ENCODE measurements at regions of chr17 and their contacts with region 1.

Region 1: DNA sequence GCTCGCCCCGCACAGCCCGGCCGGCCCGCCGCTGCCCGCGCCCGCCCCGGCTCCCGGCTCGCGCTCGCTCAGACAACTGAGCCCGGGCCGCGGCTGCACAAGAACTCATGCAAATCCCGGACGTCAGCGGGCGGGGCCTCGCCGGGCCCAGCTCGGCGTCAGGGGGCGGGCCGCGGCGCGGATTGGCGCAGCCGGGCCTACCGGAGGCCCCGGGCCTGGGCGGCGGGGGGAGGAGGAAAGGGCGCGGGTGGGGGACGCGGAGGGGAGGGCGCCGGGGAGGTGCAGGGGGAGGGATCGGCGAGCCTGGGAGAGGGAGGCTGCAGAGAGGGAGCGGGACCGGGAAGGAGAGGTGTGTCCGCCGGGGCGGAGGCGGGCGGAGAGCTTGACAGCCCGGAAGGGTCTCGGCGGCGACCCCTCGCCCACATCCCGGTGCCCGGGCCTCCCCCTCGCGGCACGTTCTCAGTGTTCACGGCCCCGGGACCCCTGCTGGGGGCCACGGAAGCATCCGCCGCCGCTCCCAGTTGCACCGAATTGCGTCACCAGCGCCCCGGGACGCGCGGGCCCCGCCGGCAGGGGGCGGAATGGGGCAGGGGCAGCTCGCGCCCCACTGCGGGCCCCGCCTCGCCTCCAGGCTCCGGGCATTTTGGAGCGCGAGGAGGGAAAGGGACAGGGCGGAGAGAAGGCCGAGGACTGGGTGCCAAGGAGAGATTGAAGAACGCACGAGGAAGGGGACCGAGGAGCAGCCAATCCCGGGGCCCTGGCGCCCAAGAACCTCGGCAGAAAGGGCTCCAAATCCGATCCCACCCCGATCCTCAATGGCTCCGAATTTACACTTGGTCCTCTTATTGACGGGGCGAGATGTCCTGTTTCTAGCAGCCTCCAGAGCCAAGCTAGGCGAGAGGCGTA is at the start of gene CBX4:
- DNase-seq: peak; percentile 99
- H3K4me3 ChIP-seq: peak within 1 kb of the TSS; percentile 54 to 91
- H3K27ac ChIP-seq: peak within 1 kb of the TSS; percentile 74 to 77
- H3K4me1 ChIP-seq: peaks cover 26 to 63% of the 10 kb centered on the region in 2 experiments
- H3K27me3 ChIP-seq: peaks cover 39% of the 10 kb centered on the region
- CTCF ChIP-seq: peak; percentile 86
- EP300 ChIP-seq: no peak
- RAD21 ChIP-seq: no peak
- polyA plus RNA-seq, gene CBX4: 16.6 and 21.9 TPM in 2 replicates

Region 2: DNA sequence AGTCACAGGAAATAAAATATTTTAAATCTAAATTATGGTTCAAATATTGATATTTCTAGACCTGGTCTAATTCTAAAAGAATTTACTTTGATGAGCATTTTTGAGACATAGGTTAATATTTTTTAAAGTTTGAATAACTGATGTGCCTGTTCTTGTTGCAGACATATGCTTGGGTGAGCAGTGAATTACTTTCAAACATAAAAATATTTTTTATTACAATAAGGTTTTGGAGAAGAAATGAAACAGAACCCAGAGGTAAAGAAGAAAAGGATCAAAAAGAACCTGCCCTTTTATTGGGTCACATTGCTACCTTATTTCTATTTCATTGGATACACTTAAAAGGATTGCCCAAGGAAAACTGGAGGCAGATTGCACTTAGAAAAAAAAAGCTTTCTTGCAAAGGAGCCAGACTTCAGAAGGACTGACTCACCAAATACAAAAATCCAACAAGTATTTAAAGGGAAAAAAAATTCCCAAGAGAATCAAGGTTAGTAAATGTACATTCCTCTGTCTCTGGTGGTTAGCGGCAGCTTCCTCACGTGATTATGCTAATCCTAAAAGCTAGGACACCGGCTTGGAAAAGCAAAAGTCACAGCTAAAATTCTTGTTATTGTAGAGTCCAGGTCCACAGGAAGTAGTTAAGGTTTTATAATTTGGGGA is 90.3 kb before region 1 on chr17:
- CTCF ChIA-PET with region 1: interaction called, 174 read pairs
- POLR2A ChIA-PET with region 1: interaction called, 3 read pairs
- DNase-seq: no peak
- H3K4me3 ChIP-seq: no peak overlapping the region
- H3K27ac ChIP-seq: no peak overlapping the region
- H3K4me1 ChIP-seq: peaks cover 0 to 6% of the 10 kb centered on the region in 2 experiments; a peak in 1 of 4 replicates
- H3K27me3 ChIP-seq: peaks cover 22% of the 10 kb centered on the region
- CTCF ChIP-seq: no peak
- EP300 ChIP-seq: no peak
- RAD21 ChIP-seq: no peak

Region 3: GRCh38 chr17:79810130-79811010 is 29.2 kb before region 1 on chr17:
- CTCF ChIA-PET with region 1: interaction called, 274 read pairs
- POLR2A ChIA-PET with region 1: interaction called, 93 read pairs
- DNase-seq: peak; percentile 97
- H3K4me3 ChIP-seq: peak overlapping the region; percentile 51 to 64
- H3K27ac ChIP-seq: peak overlapping the region in 1 of 2 experiments; percentile 90; a peak in 2 of 4 replicates
- H3K4me1 ChIP-seq: peaks cover 15 to 41% of the 10 kb centered on the region in 2 experiments
- H3K27me3 ChIP-seq: peaks cover 43% of the 10 kb centered on the region
- CTCF ChIP-seq: no peak
- EP300 ChIP-seq: no peak; a peak in 1 of 4 replicates
- RAD21 ChIP-seq: no peak

Region 4: GRCh38 chr17:79850571-79851461 is 11.2 kb after region 1 on chr17:
- CTCF ChIA-PET with region 1: interaction called, 42 read pairs
- POLR2A ChIA-PET with region 1: interaction called, 5 read pairs
- DNase-seq: no peak
- H3K4me3 ChIP-seq: no peak overlapping the region
- H3K27ac ChIP-seq: no peak overlapping the region
- H3K4me1 ChIP-seq: peaks cover 3 to 14% of the 10 kb centered on the region in 2 experiments; a peak in 1 of 4 replicates
- H3K27me3 ChIP-seq: no peaks in the 10 kb centered on the region
- CTCF ChIP-seq: no peak
- EP300 ChIP-seq: no peak
- RAD21 ChIP-seq: no peak

Region 5: GRCh38 chr17:79915850-79916430 is 76.3 kb after region 1 on chr17:
- CTCF ChIA-PET with region 1: interaction called, 182 read pairs
- POLR2A ChIA-PET with region 1: interaction called, 11 read pairs
- DNase-seq: no peak
- H3K4me3 ChIP-seq: no peak overlapping the region
- H3K27ac ChIP-seq: no peak overlapping the region
- H3K4me1 ChIP-seq: peaks cover 9 to 27% of the 10 kb centered on the region in 2 experiments; a peak in 2 of 4 replicates
- H3K27me3 ChIP-seq: no peaks in the 10 kb centered on the region
- CTCF ChIP-seq: peak; percentile 35
- EP300 ChIP-seq: no peak
- RAD21 ChIP-seq: peak; percentile 58

Region 6: GRCh38 chr17:79970576-79971068 is 131.0 kb after region 1 on chr17:
- CTCF ChIA-PET with region 1: interaction called, 17 read pairs
- POLR2A ChIA-PET with region 1: no interaction called
- DNase-seq: peak; percentile 33
- H3K4me3 ChIP-seq: no peak overlapping the region
- H3K27ac ChIP-seq: no peak overlapping the region
- H3K4me1 ChIP-seq: no peaks in the 10 kb centered on the region; a peak in 1 of 4 replicates
- H3K27me3 ChIP-seq: no peaks in the 10 kb centered on the region
- CTCF ChIP-seq: 0 out of 2 replicates have a peak, but pooled peaks have one; percentile 48
- EP300 ChIP-seq: no peak
- RAD21 ChIP-seq: peak; percentile 60

Region 7: GRCh38 chr17:80008383-80008840 is 168.8 kb after region 1 on chr17:
- CTCF ChIA-PET with region 1: interaction called, 22 read pairs
- POLR2A ChIA-PET with region 1: no interaction called
- DNase-seq: peak; percentile 98
- H3K4me3 ChIP-seq: no peak overlapping the region; a peak in 1 of 4 replicates
- H3K27ac ChIP-seq: no peak overlapping the region
- H3K4me1 ChIP-seq: peaks cover 0 to 5% of the 10 kb centered on the region in 2 experiments; a peak in 1 of 4 replicates
- H3K27me3 ChIP-seq: no peaks in the 10 kb centered on the region
- CTCF ChIP-seq: peak; percentile 98
- EP300 ChIP-seq: no peak
- RAD21 ChIP-seq: peak; percentile 66